ENCODE measurements at regions of chr14 and their contacts with region 1.

Region 1: GRCh38 chr14:67571272-67571850 is 28.7 kb downstream of the PIGH start:
- DNase-seq: peak; percentile 81
- ATAC-seq: peak; percentile 92
- H3K4me3 Mint-ChIP-seq: no peak overlapping the region
- H3K27ac Mint-ChIP-seq: no peak overlapping the region
- H3K4me1 Mint-ChIP-seq: peaks cover 8% of the 10 kb centered on the region
- H3K27me3 Mint-ChIP-seq: peaks cover 3% of the 10 kb centered on the region

Region 2: GRCh38 chr14:67420102-67420830 is 151.1 kb before region 1 on chr14:
- CTCF ChIA-PET with region 1: interaction called, 177 read pairs
- POLR2A ChIA-PET with region 1: no interaction called
- DNase-seq: peak; percentile 63
- ATAC-seq: peak; percentile 56
- H3K4me3 Mint-ChIP-seq: no peak overlapping the region
- H3K27ac Mint-ChIP-seq: no peak overlapping the region
- H3K4me1 Mint-ChIP-seq: peaks cover 7% of the 10 kb centered on the region
- H3K27me3 Mint-ChIP-seq: peaks cover 18% of the 10 kb centered on the region

Region 3: DNA sequence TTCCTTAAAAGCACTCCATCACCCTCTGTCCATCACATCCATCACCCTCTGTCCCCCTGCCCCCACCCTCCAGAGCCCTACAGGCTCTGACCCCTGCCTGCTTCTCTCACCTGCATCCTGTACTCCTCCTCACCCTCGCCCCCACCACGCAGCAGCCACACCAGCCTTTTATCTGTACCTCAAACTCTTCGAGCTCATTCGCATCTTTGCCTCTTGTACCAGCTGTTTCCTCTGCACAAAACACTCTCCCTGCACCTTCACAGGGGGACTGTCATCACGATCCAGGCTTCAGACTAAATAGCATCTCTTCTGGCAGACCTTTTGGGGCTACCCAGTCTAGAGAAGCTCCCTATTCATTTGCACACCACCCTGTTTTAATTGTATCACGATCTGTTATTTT is 107.0 kb before region 1 on chr14:
- CTCF ChIA-PET with region 1: interaction called, 11 read pairs
- POLR2A ChIA-PET with region 1: no interaction called
- DNase-seq: peak; percentile 56
- ATAC-seq: peak; percentile 58
- H3K4me3 Mint-ChIP-seq: no peak overlapping the region
- H3K27ac Mint-ChIP-seq: no peak overlapping the region
- H3K4me1 Mint-ChIP-seq: peaks cover 35% of the 10 kb centered on the region
- H3K27me3 Mint-ChIP-seq: peaks cover 15% of the 10 kb centered on the region

Region 4: DNA sequence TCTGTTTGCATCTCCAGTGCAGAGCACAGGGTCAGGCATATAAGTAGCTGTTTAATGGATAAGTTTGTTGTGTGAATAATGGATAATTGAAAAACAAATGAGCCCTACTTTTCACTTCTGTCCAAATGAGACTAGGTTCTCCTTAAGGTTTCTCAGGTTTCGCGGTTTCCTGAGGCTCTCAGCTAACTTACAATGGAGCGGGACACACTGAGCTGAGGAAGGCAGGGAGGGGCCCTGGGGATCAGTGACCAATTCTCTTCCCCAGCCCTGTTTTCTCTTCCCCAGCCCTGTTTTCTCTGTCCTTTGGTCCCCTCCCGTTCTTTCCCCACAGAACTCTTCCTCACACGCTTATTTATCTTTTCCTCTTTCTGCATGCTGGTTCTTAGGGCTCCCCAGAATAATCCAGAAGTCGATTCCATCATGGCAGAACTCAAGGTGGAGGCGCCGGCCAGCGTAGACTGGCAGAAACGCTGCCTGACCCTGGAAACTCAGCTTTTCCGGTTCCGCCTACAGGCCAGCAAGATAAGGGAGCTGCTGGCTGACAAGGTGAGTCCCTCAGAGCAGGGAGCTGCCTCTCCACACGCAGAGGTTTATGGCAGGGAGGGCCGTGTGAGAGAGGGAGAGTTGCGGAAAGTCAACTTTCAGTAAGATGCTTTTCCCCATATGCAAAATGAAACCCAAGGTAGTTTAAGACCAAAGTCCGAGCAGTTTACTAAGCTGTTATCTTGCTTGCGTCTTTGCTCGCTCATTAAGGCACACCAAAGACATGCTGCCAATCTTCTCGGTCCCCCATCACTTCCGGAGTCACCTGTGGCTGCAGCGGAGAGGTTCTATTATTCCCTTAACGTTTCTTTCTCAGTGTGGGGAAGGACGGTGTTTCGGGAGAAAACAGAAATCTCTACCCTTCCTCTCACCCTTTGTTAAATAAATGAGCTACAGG is 29.6 kb before region 1 on chr14:
- CTCF ChIA-PET with region 1: interaction called, 19 read pairs
- POLR2A ChIA-PET with region 1: no interaction called
- DNase-seq: peak; percentile 26
- ATAC-seq: peak; percentile 83
- H3K4me3 Mint-ChIP-seq: peak overlapping the region; percentile 55
- H3K27ac Mint-ChIP-seq: no peak overlapping the region
- H3K4me1 Mint-ChIP-seq: peaks cover 11% of the 10 kb centered on the region
- H3K27me3 Mint-ChIP-seq: peaks cover 50% of the 10 kb centered on the region

Region 5: DNA sequence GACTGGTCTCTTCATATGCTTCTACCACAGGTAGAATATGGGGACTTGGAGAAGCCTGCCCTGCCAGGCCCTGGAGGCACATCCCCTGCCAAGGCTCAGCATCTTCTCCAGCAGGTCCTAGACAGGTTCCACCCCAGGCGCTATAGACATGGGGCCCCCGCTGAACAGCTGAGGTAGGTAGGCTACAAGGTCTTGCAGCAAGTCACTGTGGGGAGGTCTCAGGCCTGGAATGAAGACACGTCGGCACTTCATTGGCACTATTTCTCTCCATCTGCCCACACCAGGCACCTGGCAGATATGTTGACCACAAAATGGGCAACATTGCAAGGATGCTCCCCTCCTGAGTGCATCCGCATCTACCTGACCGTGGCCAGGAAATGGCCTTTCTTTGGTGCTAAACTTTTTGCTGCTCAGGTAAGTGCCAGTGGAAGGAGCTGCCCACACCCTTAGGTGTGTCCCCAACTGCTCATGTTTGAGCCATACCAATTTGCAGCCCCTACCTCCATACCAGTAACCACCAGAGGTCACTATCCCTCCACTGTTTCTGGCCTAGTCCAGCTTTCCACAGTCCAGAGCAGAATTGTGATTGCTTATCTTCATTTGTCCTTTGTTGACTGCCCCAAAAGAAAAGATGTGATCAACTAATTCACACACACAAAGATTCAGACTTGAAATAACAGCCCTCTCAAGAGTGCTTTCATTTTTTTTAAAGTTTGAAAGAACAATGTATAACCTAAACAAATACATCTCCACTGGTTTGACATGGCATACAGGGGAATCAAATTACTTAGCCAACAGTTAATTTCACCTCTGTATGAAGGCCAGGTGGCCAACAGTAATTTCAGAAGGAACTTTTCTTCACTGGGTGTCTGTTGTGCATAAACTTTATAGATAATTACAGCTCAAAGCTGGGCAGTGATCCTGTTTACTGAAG is 12.6 kb after region 1 on chr14:
- CTCF ChIA-PET with region 1: interaction called, 30 read pairs
- POLR2A ChIA-PET with region 1: no interaction called
- DNase-seq: peak; percentile 42
- ATAC-seq: peak; percentile 74
- H3K4me3 Mint-ChIP-seq: no peak overlapping the region
- H3K27ac Mint-ChIP-seq: no peak overlapping the region
- H3K4me1 Mint-ChIP-seq: peaks cover 6% of the 10 kb centered on the region
- H3K27me3 Mint-ChIP-seq: no peaks in the 10 kb centered on the region

Region 6: DNA sequence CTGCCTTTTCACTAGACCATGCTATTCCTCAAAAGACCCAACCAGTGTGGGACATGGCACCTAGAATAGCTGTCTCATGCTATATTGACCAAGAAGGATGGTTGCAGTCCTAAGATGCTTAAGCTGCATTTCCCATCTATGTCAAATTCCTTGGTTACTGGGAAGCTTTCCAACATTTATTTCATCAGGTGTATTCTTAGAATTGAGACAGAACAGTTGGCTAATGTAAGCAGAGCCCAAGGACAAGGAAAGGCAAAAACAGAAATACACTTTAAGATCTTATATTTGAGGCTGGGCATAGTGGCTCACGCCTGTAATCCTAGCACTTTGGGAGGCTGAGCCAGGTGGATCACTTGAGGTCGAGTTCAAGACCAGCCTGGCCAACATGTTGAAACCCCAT is 73.1 kb after region 1 on chr14:
- CTCF ChIA-PET with region 1: no interaction called
- POLR2A ChIA-PET with region 1: no interaction called
- DNase-seq: no peak
- ATAC-seq: no peak
- H3K4me3 Mint-ChIP-seq: no peak overlapping the region
- H3K27ac Mint-ChIP-seq: no peak overlapping the region
- H3K4me1 Mint-ChIP-seq: peaks cover 8% of the 10 kb centered on the region
- H3K27me3 Mint-ChIP-seq: no peaks in the 10 kb centered on the region

Measured in activated CD8-positive, alpha-beta T cell treated with anti-CD3 and anti-CD28 coated beads, Interleukin-2, amount 10 ng/mL, durations not matched to agents 7 days and 5 days (primary cell).